CD4-positive, alpha-beta T cell (primary cell): ENCODE measurements at regions of chr7 and their contacts with region 1.

Region 1: GRCh38 chr7:55534175-55534915 is 38.0 kb downstream of the VOPP1 start:
- DNase-seq: peak in 13 of 14 experiments; percentile 27 to 84 (median 44)
- ATAC-seq: peak; percentile 45
- H3K4me3 ChIP-seq: peak overlapping the region; percentile 19
- H3K4me3 Mint-ChIP-seq: peak overlapping the region; percentile 76
- H3K27ac ChIP-seq: peak overlapping the region; percentile 59 to 75
- H3K27ac Mint-ChIP-seq: peak overlapping the region; percentile 86
- H3K4me1 ChIP-seq: peaks cover 74% of the 10 kb centered on the region
- H3K4me1 Mint-ChIP-seq: peaks cover 96% of the 10 kb centered on the region
- H3K27me3 ChIP-seq: no peaks in the 10 kb centered on the region
- H3K27me3 Mint-ChIP-seq: no peaks in the 10 kb centered on the region
- CTCF ChIP-seq: no peak

Region 2: DNA sequence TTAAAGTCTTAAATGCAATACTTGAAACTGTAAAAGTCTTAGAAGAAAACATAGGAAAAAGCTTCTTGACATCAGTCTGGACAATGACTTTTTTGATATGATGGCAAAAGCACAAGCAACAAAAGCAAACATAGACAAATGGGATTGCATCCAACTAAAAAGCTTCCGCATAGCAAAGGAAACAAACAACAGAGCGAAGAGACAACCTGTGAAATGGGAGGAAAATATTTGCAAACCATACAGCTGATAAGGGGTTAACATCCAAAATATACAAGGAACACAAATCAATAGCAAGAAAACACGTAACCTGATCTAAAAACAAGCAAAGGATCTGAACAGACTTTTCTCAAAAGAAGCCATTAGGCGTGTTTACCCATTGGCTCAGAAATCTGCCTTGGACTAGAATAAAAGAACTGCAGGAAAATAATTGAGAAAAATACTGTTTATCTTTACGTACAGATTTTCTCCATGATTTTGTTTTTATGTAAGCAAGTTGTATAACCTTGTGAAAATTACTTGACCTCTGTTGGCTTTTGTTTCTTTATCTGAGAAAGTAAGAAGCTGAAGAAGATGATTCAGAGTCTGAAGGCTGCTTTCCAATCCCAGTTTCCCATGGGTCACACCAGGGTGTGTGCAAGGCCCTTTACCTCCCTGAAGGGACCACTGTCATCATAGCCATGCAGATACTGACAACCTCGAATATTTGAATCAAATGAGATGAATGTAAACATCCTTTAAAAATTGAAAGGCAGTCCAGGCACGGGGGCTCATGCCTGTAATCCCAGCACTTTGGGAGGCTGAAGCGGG is 268.3 kb before region 1 on chr7:
- CTCF ChIA-PET with region 1: no interaction called
- POLR2A ChIA-PET with region 1: no interaction called
- intact Hi-C with region 1: no loop called
- DNase-seq: no peak
- ATAC-seq: no peak
- H3K4me3 ChIP-seq: no peak overlapping the region
- H3K4me3 Mint-ChIP-seq: no peak overlapping the region
- H3K27ac ChIP-seq: no peak overlapping the region
- H3K27ac Mint-ChIP-seq: no peak overlapping the region
- H3K4me1 ChIP-seq: no peaks in the 10 kb centered on the region
- H3K4me1 Mint-ChIP-seq: no peaks in the 10 kb centered on the region
- H3K27me3 ChIP-seq: peaks cover 0 to 3% of the 10 kb centered on the region in 2 experiments
- H3K27me3 Mint-ChIP-seq: peaks cover 13% of the 10 kb centered on the region
- CTCF ChIP-seq: no peak

Region 3: GRCh38 chr7:55415173-55415778 is 119.1 kb before region 1 on chr7:
- CTCF ChIA-PET with region 1: no interaction called
- POLR2A ChIA-PET with region 1: no interaction called
- intact Hi-C with region 1: no loop called
- DNase-seq: peak; percentile 62 to 88 (median 78)
- ATAC-seq: peak; percentile 99
- H3K4me3 ChIP-seq: no peak overlapping the region
- H3K4me3 Mint-ChIP-seq: no peak overlapping the region
- H3K27ac ChIP-seq: no peak overlapping the region
- H3K27ac Mint-ChIP-seq: no peak overlapping the region
- H3K4me1 ChIP-seq: no peaks in the 10 kb centered on the region
- H3K4me1 Mint-ChIP-seq: no peaks in the 10 kb centered on the region
- H3K27me3 ChIP-seq: no peaks in the 10 kb centered on the region
- H3K27me3 Mint-ChIP-seq: no peaks in the 10 kb centered on the region
- CTCF ChIP-seq: peak; percentile 95

Region 4: DNA sequence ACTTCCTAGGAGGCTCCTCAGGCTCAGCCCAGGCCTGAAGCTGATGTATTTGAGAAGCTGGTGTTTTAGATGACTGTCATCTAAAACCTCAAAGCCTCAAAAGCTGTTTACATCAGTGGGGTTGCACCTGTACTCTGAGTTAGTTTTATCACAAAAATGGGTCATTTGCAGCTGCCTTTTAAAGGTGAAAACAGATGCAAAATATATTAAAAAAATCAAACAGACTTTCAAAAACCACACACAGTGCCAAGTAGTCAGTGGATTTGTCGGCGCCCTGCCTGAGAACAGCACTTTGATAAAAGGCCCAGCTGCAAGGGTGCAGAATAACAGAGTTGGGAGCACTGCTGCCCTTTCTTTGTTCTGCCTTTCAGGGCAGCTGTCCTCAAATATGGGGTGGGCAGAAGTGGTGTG is 65.1 kb before region 1 on chr7:
- CTCF ChIA-PET with region 1: interaction called, 3 read pairs
- POLR2A ChIA-PET with region 1: interaction called, 42 read pairs
- intact Hi-C with region 1: loop called in 1 of 2 experiments (anchors 10 kb)
- DNase-seq: peak in 13 of 14 experiments; percentile 25 to 79 (median 46)
- ATAC-seq: peak; percentile 89
- H3K4me3 ChIP-seq: no peak overlapping the region
- H3K4me3 Mint-ChIP-seq: peak overlapping the region; percentile 82
- H3K27ac ChIP-seq: peak overlapping the region; percentile 66 to 79
- H3K27ac Mint-ChIP-seq: peak overlapping the region; percentile 89
- H3K4me1 ChIP-seq: peaks cover 88% of the 10 kb centered on the region
- H3K4me1 Mint-ChIP-seq: peaks cover 76% of the 10 kb centered on the region
- H3K27me3 ChIP-seq: no peaks in the 10 kb centered on the region
- H3K27me3 Mint-ChIP-seq: no peaks in the 10 kb centered on the region
- CTCF ChIP-seq: no peak

Region 5: DNA sequence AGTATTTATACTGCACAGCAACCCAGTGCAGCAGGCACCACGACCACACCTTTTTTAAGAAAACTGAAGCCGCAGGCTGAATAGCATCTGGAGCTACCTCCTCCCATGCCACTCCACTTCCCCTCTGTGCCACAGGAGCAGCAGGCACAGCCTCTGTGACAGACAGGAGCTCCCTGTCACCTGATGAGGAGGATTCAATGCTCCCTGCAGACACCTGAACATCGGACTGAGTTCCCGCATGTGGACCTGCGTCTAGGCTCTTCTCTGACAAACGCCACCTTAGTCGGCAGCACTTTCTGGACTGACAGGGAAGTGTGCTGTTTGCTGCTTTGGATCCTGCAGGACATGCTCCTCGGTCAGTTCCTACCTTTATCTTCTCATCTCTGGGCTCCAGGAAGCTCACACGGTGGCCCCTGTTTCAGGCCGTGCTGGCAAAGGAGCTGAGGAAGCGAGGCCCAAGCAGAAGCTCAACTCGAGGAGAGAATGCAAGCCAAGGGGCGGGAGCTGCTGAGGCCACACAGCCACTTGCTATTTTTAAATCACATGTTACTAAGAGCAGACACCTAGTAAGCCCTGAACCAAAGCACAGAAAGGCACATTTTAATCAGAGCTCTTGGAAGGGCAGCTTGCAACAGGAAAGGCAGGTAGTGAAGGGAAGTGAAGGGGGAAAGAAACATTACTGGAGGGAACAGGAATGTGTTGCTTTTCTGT is 18.6 kb before region 1 on chr7:
- CTCF ChIA-PET with region 1: interaction called, 3 read pairs
- POLR2A ChIA-PET with region 1: interaction called, 5 read pairs
- intact Hi-C with region 1: loop called in 1 of 2 experiments (anchors 2 kb)
- DNase-seq: peak in 1 of 14 experiments; percentile 15
- ATAC-seq: no peak
- H3K4me3 ChIP-seq: no peak overlapping the region
- H3K4me3 Mint-ChIP-seq: peak overlapping the region; percentile 18
- H3K27ac ChIP-seq: no peak overlapping the region
- H3K27ac Mint-ChIP-seq: peak overlapping the region; percentile 67
- H3K4me1 ChIP-seq: peaks cover 52% of the 10 kb centered on the region
- H3K4me1 Mint-ChIP-seq: peaks cover 68% of the 10 kb centered on the region
- H3K27me3 ChIP-seq: no peaks in the 10 kb centered on the region
- H3K27me3 Mint-ChIP-seq: no peaks in the 10 kb centered on the region
- CTCF ChIP-seq: no peak

Region 6: DNA sequence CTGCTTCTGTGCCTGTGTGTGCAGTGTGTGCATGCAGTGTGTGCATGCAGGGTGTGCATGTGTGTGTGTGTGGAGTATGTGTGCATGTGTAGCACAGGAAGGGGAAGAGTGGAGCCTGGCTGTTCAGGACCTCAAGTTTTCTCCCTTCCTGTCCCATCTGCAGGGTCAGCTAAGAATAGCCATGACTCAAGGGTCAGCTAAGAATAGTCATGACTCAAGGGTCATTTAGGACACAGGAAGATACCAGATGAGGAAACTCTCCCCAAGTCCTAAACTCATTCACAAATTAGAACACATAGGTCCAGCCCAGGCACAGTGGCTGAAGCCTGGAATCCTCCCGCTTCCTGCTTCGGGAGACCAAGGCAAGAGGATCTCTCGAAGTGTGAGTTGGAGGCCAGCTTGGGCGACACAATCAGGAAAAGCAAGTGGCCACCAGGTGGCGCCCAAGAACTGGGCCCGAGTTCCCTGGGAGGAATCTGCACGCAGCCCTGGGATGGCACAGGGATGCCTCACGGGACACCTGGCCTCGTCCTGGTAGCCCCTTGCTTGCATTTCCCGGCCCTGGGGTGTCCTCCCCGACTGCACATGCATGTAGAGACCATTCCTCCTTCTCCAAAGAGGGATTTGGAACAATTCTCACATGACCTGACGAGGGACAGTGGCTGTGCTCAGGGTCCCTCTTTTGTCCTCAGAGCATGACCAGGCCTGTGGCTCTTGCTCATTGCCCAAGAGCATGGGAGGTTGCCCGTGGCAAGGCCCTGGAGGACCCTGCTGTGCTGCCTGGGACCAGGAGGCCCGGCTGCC is 59.4 kb after region 1 on chr7:
- CTCF ChIA-PET with region 1: interaction called, 7 read pairs
- POLR2A ChIA-PET with region 1: no interaction called
- intact Hi-C with region 1: loop called in 1 of 2 experiments (anchors 5 kb)
- DNase-seq: peak; percentile 54 to 86 (median 66)
- ATAC-seq: peak; percentile 61
- H3K4me3 ChIP-seq: no peak overlapping the region
- H3K4me3 Mint-ChIP-seq: no peak overlapping the region
- H3K27ac ChIP-seq: no peak overlapping the region
- H3K27ac Mint-ChIP-seq: no peak overlapping the region
- H3K4me1 ChIP-seq: peaks cover 22% of the 10 kb centered on the region
- H3K4me1 Mint-ChIP-seq: peaks cover 16% of the 10 kb centered on the region
- H3K27me3 ChIP-seq: no peaks in the 10 kb centered on the region
- H3K27me3 Mint-ChIP-seq: peaks cover 4% of the 10 kb centered on the region
- CTCF ChIP-seq: peak; percentile 83